GM12878 (cell line): ENCODE measurements at regions of chr6 and their contacts with region 1.

Region 1: DNA sequence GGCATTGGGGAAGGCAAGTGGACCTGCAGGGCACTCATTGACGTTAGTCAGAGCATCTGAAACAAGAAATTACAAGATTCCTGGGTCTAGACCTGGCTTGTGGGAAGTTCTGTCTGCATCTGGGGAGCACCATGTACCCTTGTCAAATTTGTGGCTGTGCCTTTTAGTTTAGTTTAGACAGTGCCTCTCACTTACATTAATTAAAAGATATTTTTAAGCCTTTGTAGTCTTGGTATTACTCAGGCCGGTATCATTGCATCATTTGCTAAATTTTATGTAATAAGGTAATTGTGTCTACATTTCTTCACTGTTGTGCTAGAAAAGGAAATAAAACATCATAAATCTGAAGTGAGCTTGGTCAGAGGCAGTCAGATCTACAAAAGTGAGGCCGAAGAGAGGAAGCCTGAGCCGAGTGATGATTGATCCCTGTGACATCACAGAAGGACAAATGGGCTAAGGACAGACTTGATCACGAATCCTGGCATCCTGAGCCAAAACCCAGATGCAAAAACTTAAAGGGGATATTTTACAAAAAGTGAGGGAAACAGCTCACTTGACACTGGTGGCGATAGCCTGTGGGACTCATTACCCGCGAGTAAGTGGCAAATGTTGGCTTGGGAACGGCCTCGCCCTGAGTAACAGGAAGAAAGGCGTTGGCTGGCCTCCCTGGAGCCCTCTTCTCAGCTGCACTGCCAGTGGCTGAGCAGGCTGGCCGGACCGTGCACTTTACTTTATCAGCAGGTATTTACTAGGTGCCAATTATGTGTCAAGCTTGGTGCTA is 106.5 kb downstream of the TCP11 start:
- DNase-seq: no peak
- ATAC-seq: peak; percentile 85
- H3K4me3 ChIP-seq: no peak overlapping the region
- H3K27ac ChIP-seq: no peak overlapping the region
- H3K4me1 ChIP-seq: peaks cover 16% of the 10 kb centered on the region
- H3K27me3 ChIP-seq: no peaks in the 10 kb centered on the region
- CTCF ChIP-seq: no peak
- EP300 ChIP-seq: no peak
- POLR2A ChIP-seq: no peak
- RAD21 ChIP-seq: no peak

Region 2: DNA sequence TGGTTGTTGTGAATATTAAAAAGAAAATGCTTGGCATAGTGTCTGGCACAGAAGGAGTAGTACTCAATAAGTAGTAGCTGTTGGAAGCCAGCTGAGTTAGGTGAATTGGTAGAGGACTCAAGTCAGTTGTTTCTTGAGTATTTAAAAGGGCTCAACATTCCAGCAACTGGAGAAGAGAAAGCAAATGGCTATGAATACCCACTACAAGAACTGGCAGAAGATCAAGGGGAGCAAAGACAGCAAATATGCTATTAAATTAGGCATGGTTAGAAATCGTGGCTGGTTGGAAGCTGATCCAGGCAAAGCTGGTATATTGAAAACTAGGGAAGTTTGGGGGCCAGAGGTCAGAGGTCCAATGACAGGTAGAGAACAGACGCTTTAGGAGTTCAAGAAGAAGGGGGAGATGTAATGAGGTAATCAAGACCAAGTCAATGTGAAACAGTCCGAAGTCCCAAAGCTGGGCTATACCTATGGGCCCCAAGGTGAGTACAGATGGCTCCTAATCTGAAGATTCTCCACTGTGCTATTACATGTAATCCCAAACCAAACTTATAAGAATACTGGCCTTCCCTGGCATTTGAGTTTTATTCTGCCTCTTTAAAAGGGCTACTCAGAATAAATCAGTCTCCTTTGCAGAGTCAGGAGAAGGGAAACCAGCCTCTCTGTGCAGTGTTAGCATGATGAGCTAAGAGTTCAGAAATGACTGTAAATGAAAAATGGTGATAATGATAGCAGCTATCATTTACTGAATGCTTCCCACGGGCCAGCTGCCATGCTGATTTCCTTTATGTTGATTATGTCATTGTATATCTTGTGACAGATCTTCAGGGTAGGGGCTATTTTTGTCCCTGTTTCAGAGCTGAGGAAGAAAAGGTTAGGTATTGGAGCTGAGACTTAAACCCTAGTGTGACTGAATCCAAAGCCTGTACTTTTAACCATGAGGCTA is 23.2 kb before region 1 on chr6:
- CTCF ChIA-PET with region 1: interaction called, 4 read pairs
- POLR2A ChIA-PET with region 1: no interaction called
- RAD21 ChIA-PET with region 1: interaction called, 4 read pairs
- SMC1A ChIA-PET with region 1: interaction called, 12 read pairs
- in situ Hi-C with region 1: no loop called
- intact Hi-C with region 1: no loop called
- DNase-seq: no peak
- ATAC-seq: peak; percentile 96
- H3K4me3 ChIP-seq: no peak overlapping the region
- H3K27ac ChIP-seq: no peak overlapping the region
- H3K4me1 ChIP-seq: no peaks in the 10 kb centered on the region
- H3K27me3 ChIP-seq: no peaks in the 10 kb centered on the region
- CTCF ChIP-seq: no peak
- EP300 ChIP-seq: peak; percentile 10 to 53; a peak in 1 of 4 replicates
- POLR2A ChIP-seq: no peak
- RAD21 ChIP-seq: no peak